ENCODE measurements at regions of chr10 and their contacts with region 1.

Region 1: GRCh38 chr10:62661143-62661542 is 143.4 kb upstream of the ADO start:
- DNase-seq: peak; percentile 25 to 67
- H3K4me3 ChIP-seq: no peak overlapping the region
- H3K4me3 Mint-ChIP-seq: no peak overlapping the region
- H3K27ac Mint-ChIP-seq: no peak overlapping the region
- H3K4me1 ChIP-seq: no peaks in the 10 kb centered on the region; the same call in 1 of the 2 replicates
- H3K4me1 Mint-ChIP-seq: no peaks in the 10 kb centered on the region
- H3K27me3 ChIP-seq: no peaks in the 10 kb centered on the region
- H3K27me3 Mint-ChIP-seq: peaks cover 9% of the 10 kb centered on the region
- CTCF ChIP-seq: no peak

Region 2: GRCh38 chr10:62284221-62284620 is 376.9 kb before region 1 on chr10:
- CTCF ChIA-PET with region 1: no interaction called
- POLR2A ChIA-PET with region 1: no interaction called
- intact Hi-C with region 1: no loop called
- DNase-seq: no peak
- H3K4me3 ChIP-seq: no peak overlapping the region
- H3K4me3 Mint-ChIP-seq: no peak overlapping the region
- H3K27ac Mint-ChIP-seq: no peak overlapping the region
- H3K4me1 ChIP-seq: no peaks in the 10 kb centered on the region
- H3K4me1 Mint-ChIP-seq: no peaks in the 10 kb centered on the region
- H3K27me3 ChIP-seq: no peaks in the 10 kb centered on the region
- H3K27me3 Mint-ChIP-seq: peaks cover 10% of the 10 kb centered on the region
- CTCF ChIP-seq: no peak

Region 3: GRCh38 chr10:62707810-62708209 is 46.7 kb after region 1 on chr10:
- CTCF ChIA-PET with region 1: no interaction called
- POLR2A ChIA-PET with region 1: no interaction called
- intact Hi-C with region 1: no loop called
- DNase-seq: no peak
- H3K4me3 ChIP-seq: no peak overlapping the region
- H3K4me3 Mint-ChIP-seq: no peak overlapping the region
- H3K27ac Mint-ChIP-seq: no peak overlapping the region
- H3K4me1 ChIP-seq: no peaks in the 10 kb centered on the region
- H3K4me1 Mint-ChIP-seq: no peaks in the 10 kb centered on the region
- H3K27me3 ChIP-seq: no peaks in the 10 kb centered on the region
- H3K27me3 Mint-ChIP-seq: peaks cover 8% of the 10 kb centered on the region
- CTCF ChIP-seq: no peak

Region 4: GRCh38 chr10:62760401-62760800 is 99.3 kb after region 1 on chr10:
- CTCF ChIA-PET with region 1: no interaction called
- POLR2A ChIA-PET with region 1: no interaction called
- intact Hi-C with region 1: loop called (anchors 5 kb)
- DNase-seq: no peak
- H3K4me3 ChIP-seq: no peak overlapping the region
- H3K4me3 Mint-ChIP-seq: no peak overlapping the region
- H3K27ac Mint-ChIP-seq: no peak overlapping the region
- H3K4me1 ChIP-seq: peaks cover 14% of the 10 kb centered on the region
- H3K4me1 Mint-ChIP-seq: peaks cover 9% of the 10 kb centered on the region
- H3K27me3 ChIP-seq: no peaks in the 10 kb centered on the region
- H3K27me3 Mint-ChIP-seq: peaks cover 13% of the 10 kb centered on the region
- CTCF ChIP-seq: no peak

Measured in Caco-2 (cell line).